ENCODE measurements at regions of chr6 and their contacts with region 1.

Region 1: GRCh38 chr6:156933201-156934068 is 156.3 kb downstream of the ARID1B start:
- DNase-seq: peak in 1 of 5 donors; percentile 49
- ATAC-seq: peak; percentile 61 to 86 (median 74)
- H3K4me3 ChIP-seq: no peak overlapping the region
- H3K27ac ChIP-seq: peak overlapping the region in 10 of 12 donors; percentile 4 to 58 (median 40)
- H3K4me1 ChIP-seq: peaks cover 3 to 65% (median 24%) of the 10 kb centered on the region in 12 donors
- H3K27me3 ChIP-seq: no peaks in the 10 kb centered on the region
- CTCF ChIP-seq: peak in 6 of 12 donors; percentile 14 to 41 (median 20)
- POLR2A ChIP-seq: no peak

Region 2: DNA sequence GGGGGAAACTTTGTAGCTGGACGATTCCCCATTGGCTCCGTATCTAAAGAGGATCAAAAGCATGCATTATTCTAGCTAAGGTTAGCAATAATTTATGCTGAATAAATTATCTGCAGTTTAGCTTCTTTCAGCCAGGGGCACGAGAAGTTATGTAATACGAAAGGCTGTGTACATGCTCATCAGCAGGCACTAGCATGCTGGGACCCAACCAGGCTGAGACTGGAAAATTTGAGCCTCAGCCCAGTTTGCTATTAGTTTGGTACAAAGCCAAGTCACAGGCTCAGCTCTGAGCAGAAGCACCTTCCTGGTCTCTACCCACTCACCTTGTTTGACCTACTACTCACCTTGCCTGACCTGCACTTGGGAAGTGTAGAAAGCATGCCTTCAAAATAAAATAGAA is 484.3 kb before region 1 on chr6:
- intact Hi-C with region 1: no loop called
- DNase-seq: peak in 2 of 5 donors; percentile 32 to 33
- ATAC-seq: peak; percentile 42 to 75 (median 64)
- H3K4me3 ChIP-seq: no peak overlapping the region
- H3K27ac ChIP-seq: no peak overlapping the region
- H3K4me1 ChIP-seq: peaks cover 0 to 6% (median 0%) of the 10 kb centered on the region in 12 donors
- H3K27me3 ChIP-seq: no peaks in the 10 kb centered on the region
- CTCF ChIP-seq: no peak
- POLR2A ChIP-seq: no peak

Region 3: DNA sequence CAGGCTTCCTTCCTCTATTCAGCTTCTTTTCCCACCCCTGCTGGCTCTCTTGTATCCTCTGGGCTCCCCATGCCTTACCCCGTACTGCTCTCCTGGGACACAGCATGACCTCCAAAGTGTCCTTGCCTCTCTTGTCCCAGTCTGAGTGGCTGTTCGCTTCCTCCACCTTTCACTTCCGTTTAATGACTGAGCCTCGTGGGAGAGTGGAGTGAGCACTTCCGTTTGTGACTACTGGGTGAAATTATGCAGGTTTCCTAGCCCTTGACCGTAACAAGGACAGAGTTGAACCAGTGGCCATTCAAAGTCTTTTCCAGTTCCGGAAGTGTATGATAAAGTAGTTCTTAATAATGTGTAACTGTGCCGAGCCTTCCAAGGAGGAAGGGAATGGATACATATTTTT is 47.0 kb before region 1 on chr6:
- intact Hi-C with region 1: loop called in 2 of 10 experiments (anchors 5 kb)
- DNase-seq: peak in 3 of 5 donors; percentile 42 to 54 (median 45)
- ATAC-seq: peak; percentile 29 to 72 (median 66)
- H3K4me3 ChIP-seq: no peak overlapping the region
- H3K27ac ChIP-seq: peak overlapping the region in 11 of 12 donors; percentile 6 to 54 (median 30)
- H3K4me1 ChIP-seq: peaks cover 8 to 93% (median 75%) of the 10 kb centered on the region in 12 donors
- H3K27me3 ChIP-seq: no peaks in the 10 kb centered on the region
- CTCF ChIP-seq: no peak
- POLR2A ChIP-seq: no peak

Region 4: GRCh38 chr6:156953479-156954146 is 20.2 kb after region 1 on chr6:
- intact Hi-C with region 1: loop called in 1 of 10 experiments (anchors 2 kb)
- DNase-seq: peak in 2 of 5 donors; percentile 47 to 62
- ATAC-seq: peak; percentile 57 to 80 (median 71)
- H3K4me3 ChIP-seq: peak overlapping the region in 7 of 12 donors; percentile 6 to 39 (median 29)
- H3K27ac ChIP-seq: peak overlapping the region in 11 of 12 donors; percentile 27 to 76 (median 53)
- H3K4me1 ChIP-seq: peaks cover 13 to 88% (median 66%) of the 10 kb centered on the region in 12 donors
- H3K27me3 ChIP-seq: no peaks in the 10 kb centered on the region
- CTCF ChIP-seq: peak in 10 of 12 donors; percentile 24 to 66 (median 50)
- POLR2A ChIP-seq: no peak

Measured in heart left ventricle (tissue), 16 donors.